Ascending aorta (tissue), 2 donors: ENCODE measurements at regions of chr6 and their contacts with region 1.

Region 1: DNA sequence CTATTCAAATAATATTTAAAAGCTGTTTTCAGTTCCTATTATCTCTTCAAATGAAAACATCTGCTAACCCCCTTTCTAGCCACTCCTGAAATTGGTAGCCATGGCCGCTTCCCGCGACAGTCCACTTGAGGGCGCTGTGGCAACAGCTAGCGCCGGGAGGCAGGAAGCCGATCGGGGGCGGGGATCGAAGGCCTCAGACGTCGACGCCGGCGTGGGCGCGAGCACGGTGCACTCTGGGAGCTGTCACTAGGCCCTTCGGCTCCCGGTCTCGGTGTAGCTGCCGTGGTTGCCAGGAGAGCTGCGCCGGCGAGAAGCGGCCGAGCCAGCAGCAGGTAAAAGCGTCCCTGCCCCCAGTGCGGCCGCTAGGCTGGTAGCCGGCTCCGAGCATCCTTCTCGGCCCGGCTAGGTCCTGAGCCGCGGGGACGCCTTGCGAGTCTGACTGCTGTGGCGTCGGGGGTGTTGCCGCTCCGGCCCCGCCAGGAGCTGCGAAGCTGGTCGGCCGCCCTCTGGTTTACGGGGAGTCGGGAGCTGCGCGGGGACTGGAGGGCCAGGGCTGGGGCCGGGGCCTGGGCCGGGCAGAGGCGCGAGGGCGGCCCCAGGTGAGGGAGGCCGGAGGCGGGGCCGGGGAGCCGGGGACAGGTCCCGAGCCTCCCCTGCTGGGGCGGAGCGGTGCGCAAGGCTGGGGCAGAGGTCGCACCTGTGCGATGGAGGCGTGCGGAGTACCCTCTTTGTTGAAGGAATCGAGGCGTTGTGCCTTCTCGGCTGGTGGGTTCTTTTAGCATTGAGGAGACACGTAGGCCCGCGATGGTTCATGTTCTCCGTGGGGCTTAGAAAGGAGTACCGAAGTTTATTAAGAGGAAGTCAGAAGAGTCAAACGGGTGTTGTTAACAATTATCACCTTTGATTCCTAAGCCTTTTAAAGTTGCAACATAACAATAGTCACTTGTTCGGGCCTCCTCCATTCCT is at the start of gene DOP1A:
- DNase-seq: peak; percentile 75 to 97
- H3K4me3 ChIP-seq: peak within 1 kb of the TSS; percentile 66 to 95
- H3K27ac ChIP-seq: peak within 1 kb of the TSS; percentile 87 to 93
- H3K4me1 ChIP-seq: peaks cover 0 to 8% of the 10 kb centered on the region in 2 donors
- H3K27me3 ChIP-seq: no peaks in the 10 kb centered on the region
- CTCF ChIP-seq: peak; percentile 82 to 99 (median 98)
- total RNA-seq, gene DOP1A: 13.2 TPM

Region 2: DNA sequence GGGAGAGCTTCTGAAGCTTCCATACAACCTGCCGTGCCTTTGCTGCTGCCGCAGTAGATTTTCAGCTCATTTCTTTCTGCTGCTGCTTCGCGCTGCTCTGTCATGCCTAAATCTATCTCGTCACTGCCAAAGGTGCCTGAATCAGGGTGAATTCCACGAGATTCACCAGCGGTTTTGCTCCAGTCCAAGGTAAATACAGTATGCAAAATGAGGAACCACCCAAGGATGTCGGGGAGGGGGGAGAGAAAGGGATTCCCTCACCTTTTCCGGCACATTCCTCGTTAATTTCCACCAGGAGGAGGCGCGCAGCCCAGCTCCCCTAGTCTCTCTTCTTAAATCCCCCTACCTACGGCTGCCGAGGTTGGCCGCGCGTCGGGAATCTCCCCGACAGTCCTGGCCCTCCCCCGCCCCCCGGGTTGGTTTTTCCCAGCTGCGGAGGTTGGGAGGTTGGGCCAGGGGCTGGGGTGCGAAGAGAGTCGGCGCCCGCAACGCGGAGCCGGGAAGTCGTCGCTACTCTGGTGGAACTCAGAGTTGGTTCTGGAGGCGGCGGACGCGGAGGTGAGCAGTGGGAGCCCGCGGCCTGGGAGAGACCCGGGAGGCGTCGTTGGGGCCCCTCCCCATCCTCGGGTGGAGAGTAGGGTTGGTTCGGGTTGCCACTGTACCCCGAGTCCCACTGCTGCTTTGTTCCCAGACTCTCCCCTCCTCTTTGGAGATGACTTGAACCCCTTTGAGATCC is 704.2 kb before region 1 on chr6 and contains the start of gene TPBG:
- intact Hi-C with region 1: loop called (anchors 5 kb)
- DNase-seq: peak in 1 of 2 donors; percentile 74
- H3K4me3 ChIP-seq: peak within 1 kb of the TSS; percentile 63 to 93
- H3K27ac ChIP-seq: peak within 1 kb of the TSS; percentile 89 to 93
- H3K4me1 ChIP-seq: peaks cover 4 to 9% of the 10 kb centered on the region in 2 donors
- H3K27me3 ChIP-seq: no peaks in the 10 kb centered on the region
- CTCF ChIP-seq: peak in 1 of 3 experiments; percentile 42
- total RNA-seq, gene TPBG: 60.1 TPM

Region 3: DNA sequence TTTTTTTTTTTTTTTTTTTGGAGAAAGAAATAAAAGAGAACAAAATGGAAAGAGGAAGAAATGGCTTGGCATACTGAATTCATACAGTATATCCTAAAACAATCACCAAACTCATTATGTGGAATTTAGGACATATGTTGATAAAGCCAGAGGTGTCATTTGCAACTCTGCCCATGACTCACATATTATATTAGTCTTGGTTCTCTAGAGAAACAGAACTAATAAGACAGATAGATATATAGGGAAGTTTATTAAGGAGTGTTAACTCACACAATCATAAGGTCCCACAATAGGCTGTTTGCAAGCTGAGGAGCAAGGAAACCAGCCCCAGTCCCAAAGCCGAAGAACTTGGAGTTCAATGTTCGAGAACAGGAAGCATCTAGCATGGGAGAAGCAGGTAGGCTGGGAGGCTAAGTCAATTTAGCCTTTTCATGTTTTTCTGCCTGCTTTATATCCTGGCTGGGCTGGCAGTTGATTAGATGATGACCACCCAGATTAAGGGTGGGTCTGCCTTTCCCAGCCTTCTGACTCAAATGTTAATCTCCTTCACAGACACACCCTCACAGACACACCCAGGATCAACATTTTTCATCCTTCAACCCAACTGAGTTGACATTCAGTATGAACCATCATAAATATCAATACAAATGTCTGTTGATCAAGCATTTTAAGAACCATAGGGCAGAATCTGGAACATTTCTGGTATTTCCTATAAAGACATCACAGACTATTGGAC is 104.4 kb before region 1 on chr6:
- intact Hi-C with region 1: no loop called
- DNase-seq: no peak
- H3K4me3 ChIP-seq: no peak overlapping the region
- H3K27ac ChIP-seq: no peak overlapping the region
- H3K4me1 ChIP-seq: no peaks in the 10 kb centered on the region
- H3K27me3 ChIP-seq: no peaks in the 10 kb centered on the region
- CTCF ChIP-seq: no peak

Region 4: DNA sequence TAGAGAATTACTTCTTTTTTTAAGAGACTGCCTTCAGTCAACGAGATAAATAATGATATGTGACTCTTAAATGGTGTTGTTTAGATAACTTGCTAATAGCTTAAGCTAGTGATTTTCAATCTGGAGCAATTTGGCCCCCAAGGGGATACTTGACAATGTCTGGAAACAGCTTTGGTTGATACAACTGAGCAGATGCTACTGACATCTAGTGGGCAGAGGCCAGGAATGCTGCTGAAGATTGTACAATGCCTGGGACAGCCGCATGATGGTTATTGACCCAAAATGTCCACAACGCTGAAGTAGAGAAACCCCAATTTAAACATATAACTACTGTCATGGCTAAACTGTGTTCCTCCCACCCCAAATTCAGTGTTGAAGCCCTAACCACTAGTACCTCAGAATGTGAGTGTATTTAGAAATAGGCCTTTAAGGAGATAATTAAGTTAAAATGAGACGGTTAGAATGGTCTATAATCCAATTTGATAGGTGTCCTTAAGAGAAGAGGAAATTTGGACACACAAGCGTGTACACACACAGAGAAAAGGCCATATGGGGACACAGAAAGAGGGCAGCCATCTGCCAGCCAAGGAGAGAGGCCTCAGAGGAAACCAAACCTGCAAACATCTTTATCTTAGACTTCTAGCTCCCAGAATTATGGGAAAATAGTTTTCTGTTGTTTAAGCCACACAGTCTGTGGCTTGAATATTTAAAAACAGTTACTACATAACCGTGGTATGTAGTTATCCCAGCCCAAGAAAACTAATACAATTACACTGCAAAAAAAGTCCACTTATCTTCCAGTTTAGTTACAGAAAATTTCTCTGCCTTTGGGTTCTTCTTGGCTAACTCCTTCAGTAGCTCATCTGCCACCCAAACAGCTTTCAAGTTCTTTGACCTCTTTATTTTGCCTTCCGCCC is 147.7 kb after region 1 on chr6:
- intact Hi-C with region 1: loop called (anchors 2 kb)
- DNase-seq: peak in 1 of 2 donors; percentile 85
- H3K4me3 ChIP-seq: no peak overlapping the region
- H3K27ac ChIP-seq: peak overlapping the region; percentile 61 to 67
- H3K4me1 ChIP-seq: no peaks in the 10 kb centered on the region
- H3K27me3 ChIP-seq: no peaks in the 10 kb centered on the region
- CTCF ChIP-seq: peak; percentile 54 to 71 (median 64)

Region 5: DNA sequence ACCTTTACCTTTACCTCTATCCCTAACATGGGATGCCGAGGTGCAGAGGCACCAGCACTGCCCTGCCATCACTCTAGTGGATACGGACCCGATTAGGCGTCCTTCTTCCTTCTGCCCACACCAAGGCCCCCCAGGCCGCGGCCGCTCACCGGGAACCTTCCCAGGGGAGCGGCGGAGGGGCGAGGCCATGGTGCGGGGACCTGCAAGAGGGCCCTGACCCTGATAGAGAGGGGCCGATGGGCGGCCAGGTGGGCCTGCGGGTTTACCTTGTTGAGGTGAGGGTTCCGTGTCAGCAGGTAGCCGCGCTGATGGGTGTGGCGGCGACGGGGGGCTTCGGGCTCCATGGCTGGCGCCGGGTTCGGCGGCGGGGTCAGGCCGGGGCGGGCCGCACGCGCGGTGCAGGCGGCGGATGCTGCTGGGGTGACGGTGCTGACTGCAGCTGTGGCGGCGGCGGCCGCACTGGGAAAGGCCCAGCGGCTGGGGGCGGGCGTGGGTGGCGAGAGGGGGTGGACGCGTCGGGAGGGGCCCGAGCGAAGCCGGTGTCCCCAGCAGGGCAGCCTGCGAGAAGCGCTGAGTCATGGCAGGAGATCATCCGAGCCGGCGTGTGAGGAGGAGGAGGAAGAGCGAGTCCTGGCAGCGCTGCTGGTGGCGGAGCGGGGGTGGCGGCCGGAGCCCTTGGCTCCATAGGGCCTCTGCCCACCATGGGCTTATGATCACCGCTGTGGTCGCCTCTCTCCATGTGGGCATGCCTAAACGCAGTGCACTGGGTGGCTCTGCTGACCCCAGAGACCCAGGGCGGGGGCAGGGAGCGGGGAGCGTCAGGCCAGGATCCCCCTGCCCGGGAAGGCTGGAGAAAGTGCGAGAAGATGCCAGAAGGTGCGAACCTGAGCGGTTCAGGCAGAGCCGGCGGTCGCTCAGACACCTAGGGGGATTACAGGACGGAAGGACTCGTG is 363.2 kb after region 1 on chr6 and contains the start of gene ME1:
- intact Hi-C with region 1: loop called (anchors 5 kb)
- DNase-seq: peak; percentile 52 to 88
- H3K4me3 ChIP-seq: peak within 1 kb of the TSS; percentile 79 to 85
- H3K27ac ChIP-seq: peak within 1 kb of the TSS; percentile 68 to 76
- H3K4me1 ChIP-seq: peaks cover 0 to 8% of the 10 kb centered on the region in 2 donors
- H3K27me3 ChIP-seq: no peaks in the 10 kb centered on the region
- CTCF ChIP-seq: no peak
- total RNA-seq, gene ME1: 8.4 TPM

Region 6: DNA sequence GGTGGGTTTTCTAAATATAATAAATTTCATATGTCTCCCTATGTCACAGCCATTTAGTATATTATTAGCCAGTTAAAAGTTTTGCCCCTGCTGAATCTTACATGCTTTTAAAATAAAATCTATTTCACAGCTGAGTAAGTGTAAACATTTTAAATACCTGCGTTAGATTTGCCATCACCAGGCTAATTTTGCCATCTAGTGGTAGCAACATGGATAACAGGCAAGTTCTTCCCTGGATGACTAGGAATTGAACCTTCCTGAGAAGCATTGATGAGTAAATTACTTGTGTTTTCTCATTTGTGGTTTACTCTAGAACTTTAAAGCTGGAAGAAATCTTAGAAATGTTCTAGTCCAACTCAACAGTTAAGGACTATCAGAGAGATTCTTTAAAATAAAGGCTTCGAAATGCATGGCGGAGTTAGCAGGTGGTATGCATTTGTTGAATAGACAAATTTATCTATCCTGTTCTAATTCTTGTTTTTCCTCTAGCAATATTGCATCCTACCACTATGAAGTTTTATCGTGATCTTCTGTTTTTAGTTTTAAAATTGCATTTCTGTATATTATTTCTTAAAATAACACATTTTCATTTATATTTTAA is 447.2 kb after region 1 on chr6:
- intact Hi-C with region 1: loop called (anchors 5 kb)
- DNase-seq: no peak
- H3K4me3 ChIP-seq: peak overlapping the region in 1 of 2 donors; percentile 4
- H3K27ac ChIP-seq: no peak overlapping the region
- H3K4me1 ChIP-seq: peaks cover 0 to 21% of the 10 kb centered on the region in 2 donors
- H3K27me3 ChIP-seq: no peaks in the 10 kb centered on the region
- CTCF ChIP-seq: peak; percentile 62 to 87 (median 74)